Naive thymus-derived CD4-positive, alpha-beta T cell (primary cell): ENCODE measurements at regions of chr1 and their contacts with region 1.

Region 1: GRCh38 chr1:155172732-155173477 is at the start of gene KRTCAP2:
- DNase-seq: peak; percentile 89 to 93 (median 92)
- ATAC-seq: peak; percentile 91
- H3K4me3 ChIP-seq: peak within 1 kb of the TSS; percentile 90
- H3K4me3 Mint-ChIP-seq: peak within 1 kb of the TSS; percentile 94 to 100 (median 98)
- H3K27ac ChIP-seq: peak within 1 kb of the TSS; percentile 88
- H3K27ac Mint-ChIP-seq: peak within 1 kb of the TSS; percentile 95 to 99 (median 98)
- H3K4me1 ChIP-seq: peaks cover 11 to 18% of the 10 kb centered on the region in 2 donors
- H3K4me1 Mint-ChIP-seq: peaks cover 32 to 60% (median 47%) of the 10 kb centered on the region in 7 donors
- H3K27me3 ChIP-seq: no peaks in the 10 kb centered on the region
- H3K27me3 Mint-ChIP-seq: peaks cover 0 to 6% (median 0%) of the 10 kb centered on the region in 5 donors
- total RNA-seq, gene KRTCAP2: 97.4 to 236 (median 155) TPM

Region 2: GRCh38 chr1:154974063-154974807 is 198.7 kb before region 1 on chr1 and contains the start of gene CKS1B:
- CTCF ChIA-PET with region 1: interaction called, 3 read pairs
- POLR2A ChIA-PET with region 1: no interaction called
- intact Hi-C with region 1: loop called in 1 of 2 experiments (anchors 1 kb)
- DNase-seq: peak; percentile 86 to 100 (median 98)
- ATAC-seq: peak; percentile 89
- H3K4me3 ChIP-seq: peak within 1 kb of the TSS; percentile 82
- H3K4me3 Mint-ChIP-seq: no peak within 1 kb of the TSS
- H3K27ac ChIP-seq: peak within 1 kb of the TSS; percentile 94
- H3K27ac Mint-ChIP-seq: no peak within 1 kb of the TSS
- H3K4me1 ChIP-seq: peaks cover 28 to 35% of the 10 kb centered on the region in 2 donors
- H3K4me1 Mint-ChIP-seq: peaks cover 27 to 39% (median 31%) of the 10 kb centered on the region in 7 donors
- H3K27me3 ChIP-seq: no peaks in the 10 kb centered on the region
- H3K27me3 Mint-ChIP-seq: no peaks in the 10 kb centered on the region
- total RNA-seq, gene CKS1B: 8.4 to 105 (median 10.2) TPM

Region 3: GRCh38 chr1:155091071-155091709 is 81.7 kb before region 1 on chr1:
- CTCF ChIA-PET with region 1: interaction called, 88 read pairs
- POLR2A ChIA-PET with region 1: interaction called, 10 read pairs
- intact Hi-C with region 1: loop called in 1 of 2 experiments (anchors 1 kb)
- DNase-seq: peak; percentile 57 to 86 (median 73)
- ATAC-seq: peak; percentile 89
- H3K4me3 ChIP-seq: no peak overlapping the region
- H3K4me3 Mint-ChIP-seq: no peak overlapping the region
- H3K27ac ChIP-seq: no peak overlapping the region
- H3K27ac Mint-ChIP-seq: peak overlapping the region in 1 of 9 donors; percentile 33
- H3K4me1 ChIP-seq: peaks cover 2% of the 10 kb centered on the region in 2 donors
- H3K4me1 Mint-ChIP-seq: peaks cover 0 to 12% (median 4%) of the 10 kb centered on the region in 7 donors
- H3K27me3 ChIP-seq: no peaks in the 10 kb centered on the region
- H3K27me3 Mint-ChIP-seq: peaks cover 0 to 21% (median 0%) of the 10 kb centered on the region in 5 donors

Region 4: GRCh38 chr1:155193275-155193990 is 20.5 kb after region 1 on chr1:
- CTCF ChIA-PET with region 1: interaction called, 45 read pairs
- POLR2A ChIA-PET with region 1: interaction called, 25 read pairs
- intact Hi-C with region 1: loop called (anchors 1 to 2 kb)
- DNase-seq: peak in 8 of 9 donors; percentile 38 to 89 (median 54)
- ATAC-seq: peak; percentile 54
- H3K4me3 ChIP-seq: peak overlapping the region; percentile 57
- H3K4me3 Mint-ChIP-seq: peak overlapping the region; percentile 88 to 97 (median 92)
- H3K27ac ChIP-seq: peak overlapping the region; percentile 76
- H3K27ac Mint-ChIP-seq: peak overlapping the region; percentile 92 to 99 (median 97)
- H3K4me1 ChIP-seq: peaks cover 11 to 25% of the 10 kb centered on the region in 2 donors
- H3K4me1 Mint-ChIP-seq: peaks cover 8 to 35% (median 29%) of the 10 kb centered on the region in 7 donors
- H3K27me3 ChIP-seq: no peaks in the 10 kb centered on the region
- H3K27me3 Mint-ChIP-seq: no peaks in the 10 kb centered on the region

Region 5: GRCh38 chr1:155244368-155245162 is 71.7 kb after region 1 on chr1:
- CTCF ChIA-PET with region 1: interaction called, 4 read pairs
- POLR2A ChIA-PET with region 1: interaction called, 7 read pairs
- intact Hi-C with region 1: loop called (anchors 1 to 5 kb)
- DNase-seq: peak; percentile 76 to 96 (median 94)
- ATAC-seq: peak; percentile 92
- H3K4me3 ChIP-seq: peak overlapping the region; percentile 63
- H3K4me3 Mint-ChIP-seq: peak overlapping the region; percentile 84 to 97 (median 91)
- H3K27ac ChIP-seq: peak overlapping the region; percentile 73
- H3K27ac Mint-ChIP-seq: peak overlapping the region; percentile 94 to 100 (median 98)
- H3K4me1 ChIP-seq: peaks cover 19 to 20% of the 10 kb centered on the region in 2 donors
- H3K4me1 Mint-ChIP-seq: peaks cover 31 to 50% (median 44%) of the 10 kb centered on the region in 7 donors
- H3K27me3 ChIP-seq: no peaks in the 10 kb centered on the region
- H3K27me3 Mint-ChIP-seq: peaks cover 0 to 6% (median 3%) of the 10 kb centered on the region in 5 donors